ENCODE measurements at regions of chr10 and their contacts with region 1.

Region 1: DNA sequence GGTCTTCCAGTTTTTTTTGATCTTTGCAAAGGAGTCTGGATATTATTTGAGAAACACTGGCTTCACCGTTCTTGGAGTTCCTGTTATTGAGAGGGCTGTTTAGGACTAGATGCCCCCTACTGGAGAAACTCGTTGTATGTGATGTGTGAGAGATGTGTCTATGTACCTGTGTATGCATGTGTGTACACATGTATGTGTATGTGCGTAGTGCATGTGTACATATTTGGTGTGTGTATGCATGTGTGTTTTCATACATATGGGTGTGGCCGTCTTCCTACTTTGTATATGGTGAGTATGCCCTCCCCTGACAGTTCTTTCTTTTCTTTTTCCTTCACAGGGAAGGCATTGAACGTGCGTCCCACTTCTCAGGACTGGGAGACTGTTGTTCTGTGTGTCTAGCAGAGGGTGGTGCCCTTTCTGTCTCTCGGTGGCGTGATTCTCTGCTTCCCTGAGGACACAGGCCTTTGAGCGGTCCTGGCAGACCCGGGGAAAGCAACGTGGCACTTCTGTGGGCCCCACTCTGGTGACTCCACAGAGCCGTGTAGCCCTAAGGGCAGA is 3.0 kb upstream of the CALHM3 start:
- DNase-seq: peak; percentile 77
- H3K4me3 ChIP-seq: no peak overlapping the region; a peak in 1 of 4 replicates
- H3K27ac ChIP-seq: no peak overlapping the region
- H3K4me1 ChIP-seq: peaks cover 0 to 8% of the 10 kb centered on the region in 2 experiments; a peak in 1 of 4 replicates
- H3K27me3 ChIP-seq: no peaks in the 10 kb centered on the region
- CTCF ChIP-seq: peak; percentile 71
- EP300 ChIP-seq: no peak
- RAD21 ChIP-seq: peak; percentile 59

Region 2: GRCh38 chr10:103316087-103316486 is 166.0 kb before region 1 on chr10:
- CTCF ChIA-PET with region 1: no interaction called
- POLR2A ChIA-PET with region 1: no interaction called
- DNase-seq: no peak
- H3K4me3 ChIP-seq: no peak overlapping the region
- H3K27ac ChIP-seq: no peak overlapping the region
- H3K4me1 ChIP-seq: no peaks in the 10 kb centered on the region
- H3K27me3 ChIP-seq: no peaks in the 10 kb centered on the region
- CTCF ChIP-seq: no peak
- EP300 ChIP-seq: no peak
- RAD21 ChIP-seq: no peak

Region 3: DNA sequence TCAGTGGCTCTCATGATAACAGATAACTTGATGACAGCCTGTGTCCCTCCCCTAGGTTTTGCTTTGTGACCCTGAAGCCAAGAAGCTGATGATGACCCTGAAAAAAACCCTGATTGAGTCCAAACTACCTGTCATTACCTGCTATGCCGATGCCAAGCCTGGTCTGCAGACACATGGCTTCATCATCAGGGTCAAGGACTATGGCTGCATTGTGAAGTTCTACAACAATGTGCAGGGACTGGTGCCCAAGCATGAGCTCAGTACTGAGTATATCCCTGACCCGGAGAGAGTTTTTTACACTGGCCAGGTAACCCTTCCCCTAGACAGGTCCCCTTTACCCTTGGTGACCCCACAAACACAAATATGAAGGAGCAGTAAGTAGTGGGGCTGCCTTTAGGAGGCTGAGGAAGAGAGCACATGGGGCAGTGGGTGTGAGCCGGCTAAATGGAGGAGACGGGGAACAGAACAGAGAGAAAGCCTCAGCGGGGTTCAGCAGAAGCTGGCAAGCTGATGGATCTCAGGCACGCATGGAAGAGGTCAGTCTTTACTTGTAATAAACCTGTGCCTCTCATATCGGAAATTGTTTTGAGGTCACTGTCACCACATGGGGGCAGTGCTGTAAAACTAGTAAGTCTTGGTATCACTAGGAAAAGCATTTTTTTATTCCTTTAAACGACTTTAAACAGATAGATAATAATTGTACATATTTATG is 65.5 kb before region 1 on chr10:
- CTCF ChIA-PET with region 1: interaction called, 83 read pairs
- POLR2A ChIA-PET with region 1: no interaction called
- DNase-seq: peak; percentile 50
- H3K4me3 ChIP-seq: no peak overlapping the region
- H3K27ac ChIP-seq: no peak overlapping the region
- H3K4me1 ChIP-seq: no peaks in the 10 kb centered on the region
- H3K27me3 ChIP-seq: no peaks in the 10 kb centered on the region
- CTCF ChIP-seq: peak; percentile 79
- EP300 ChIP-seq: no peak
- RAD21 ChIP-seq: peak; percentile 69

Region 4: DNA sequence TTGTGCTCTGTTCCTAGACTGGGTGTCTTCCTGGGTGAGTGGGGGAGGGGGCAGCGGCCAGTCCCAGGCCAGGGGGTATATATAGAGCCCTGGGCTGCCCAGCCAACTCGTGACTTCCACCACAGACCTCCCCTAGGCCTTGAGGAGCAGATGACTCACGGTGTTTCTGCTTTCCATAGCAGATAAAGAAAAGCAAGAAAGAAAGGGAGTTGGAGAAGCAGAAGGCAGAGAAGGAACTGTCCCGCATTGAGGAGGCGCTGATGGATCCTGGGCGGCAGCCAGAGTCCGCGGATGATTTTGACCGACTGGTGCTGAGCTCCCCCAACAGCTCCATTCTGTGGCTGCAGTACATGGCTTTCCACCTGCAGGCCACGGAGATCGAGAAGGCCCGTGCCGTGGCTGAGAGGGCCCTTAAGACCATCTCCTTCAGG is 40.0 kb before region 1 on chr10:
- CTCF ChIA-PET with region 1: interaction called, 17 read pairs
- POLR2A ChIA-PET with region 1: no interaction called
- DNase-seq: no peak
- H3K4me3 ChIP-seq: no peak overlapping the region
- H3K27ac ChIP-seq: peak overlapping the region in 1 of 2 experiments; percentile 47; a peak in 1 of 4 replicates
- H3K4me1 ChIP-seq: no peaks in the 10 kb centered on the region
- H3K27me3 ChIP-seq: no peaks in the 10 kb centered on the region
- CTCF ChIP-seq: no peak
- EP300 ChIP-seq: no peak
- RAD21 ChIP-seq: no peak

Region 5: GRCh38 chr10:103470761-103471653 is 11.0 kb before region 1 on chr10:
- CTCF ChIA-PET with region 1: interaction called, 34 read pairs
- POLR2A ChIA-PET with region 1: no interaction called
- DNase-seq: no peak
- H3K4me3 ChIP-seq: no peak overlapping the region
- H3K27ac ChIP-seq: no peak overlapping the region
- H3K4me1 ChIP-seq: no peaks in the 10 kb centered on the region
- H3K27me3 ChIP-seq: no peaks in the 10 kb centered on the region
- CTCF ChIP-seq: no peak
- EP300 ChIP-seq: no peak
- RAD21 ChIP-seq: no peak

Region 6: GRCh38 chr10:103542764-103543616 is 60.9 kb after region 1 on chr10:
- CTCF ChIA-PET with region 1: interaction called, 15 read pairs
- POLR2A ChIA-PET with region 1: no interaction called
- DNase-seq: peak; percentile 82
- H3K4me3 ChIP-seq: peak overlapping the region; percentile 32 to 63; a peak in 3 of 4 replicates
- H3K27ac ChIP-seq: peak overlapping the region in 1 of 2 experiments; percentile 91; a peak in 2 of 4 replicates
- H3K4me1 ChIP-seq: peaks cover 8 to 43% of the 10 kb centered on the region in 2 experiments; a peak in 3 of 4 replicates
- H3K27me3 ChIP-seq: peaks cover 15% of the 10 kb centered on the region; the same call in 1 of the 2 replicates
- CTCF ChIP-seq: peak; percentile 60
- EP300 ChIP-seq: peak in 1 of 2 experiments; percentile 74; a peak in 2 of 4 replicates
- RAD21 ChIP-seq: peak; percentile 54

Measured in SK-N-SH (cell line).